Adrenal gland (tissue), 19 donors: ENCODE measurements at regions of chr5 and their contacts with region 1.

Region 1: GRCh38 chr5:134304311-134304710 is 62.7 kb downstream of the CDKL3 start:
- DNase-seq: no peak
- H3K4me3 ChIP-seq: no peak overlapping the region
- H3K27ac ChIP-seq: no peak overlapping the region
- H3K4me1 ChIP-seq: no peaks in the 10 kb centered on the region
- H3K27me3 ChIP-seq: no peaks in the 10 kb centered on the region
- CTCF ChIP-seq: no peak
- POLR2A ChIP-seq: no peak

Region 2: DNA sequence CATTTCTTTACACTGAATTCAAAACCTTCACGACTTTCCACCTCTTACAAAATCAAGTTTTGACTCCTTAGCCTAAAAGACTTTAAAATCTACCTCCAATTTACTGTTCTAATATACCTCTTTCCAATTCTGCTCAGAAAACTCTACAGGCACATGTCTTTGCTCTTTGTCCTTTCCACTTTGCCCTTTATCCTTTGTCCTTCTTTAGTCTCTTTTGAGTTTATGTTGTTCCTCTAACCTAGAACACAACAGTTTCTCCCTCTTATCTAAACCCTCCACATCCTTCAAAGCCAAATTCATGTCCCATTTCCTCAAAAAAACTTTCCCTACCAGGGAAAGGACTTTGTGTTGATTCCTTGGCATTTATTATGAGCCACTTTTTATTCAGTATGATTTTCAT is 61.3 kb after region 1 on chr5:
- intact Hi-C with region 1: loop called in 1 of 2 experiments (anchors 10 kb)
- DNase-seq: no peak
- H3K4me3 ChIP-seq: no peak overlapping the region
- H3K27ac ChIP-seq: no peak overlapping the region
- H3K4me1 ChIP-seq: peaks cover 7 to 23% of the 10 kb centered on the region in 2 donors
- H3K27me3 ChIP-seq: no peaks in the 10 kb centered on the region
- CTCF ChIP-seq: no peak
- POLR2A ChIP-seq: no peak

Region 3: DNA sequence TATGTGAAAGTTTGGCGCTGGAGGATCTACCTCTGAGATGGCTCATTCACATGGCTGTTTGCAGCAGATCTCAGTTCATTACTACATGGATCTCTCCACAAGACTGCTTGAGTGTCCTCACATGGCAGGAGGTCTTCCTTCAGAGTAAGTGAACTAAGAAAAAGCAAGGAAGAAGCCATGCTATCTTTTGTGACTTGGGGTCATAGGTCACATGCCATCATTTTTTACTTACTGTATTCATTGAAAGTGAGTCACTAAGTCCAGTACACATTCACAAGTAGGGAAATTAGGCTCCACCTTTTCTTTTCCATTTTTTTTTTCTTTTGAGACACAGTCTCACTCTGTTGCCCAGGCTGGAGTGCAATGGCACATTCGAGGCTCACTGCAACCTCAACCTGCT is 116.0 kb after region 1 on chr5:
- intact Hi-C with region 1: no loop called
- DNase-seq: no peak
- H3K4me3 ChIP-seq: no peak overlapping the region
- H3K27ac ChIP-seq: no peak overlapping the region
- H3K4me1 ChIP-seq: no peaks in the 10 kb centered on the region
- H3K27me3 ChIP-seq: no peaks in the 10 kb centered on the region
- CTCF ChIP-seq: no peak
- POLR2A ChIP-seq: no peak

Region 4: GRCh38 chr5:134586866-134587524 is 282.7 kb after region 1 on chr5:
- intact Hi-C with region 1: loop called (anchors 5 kb)
- DNase-seq: peak; percentile 84 to 93 (median 90)
- H3K4me3 ChIP-seq: no peak overlapping the region
- H3K27ac ChIP-seq: peak overlapping the region in 2 of 5 donors; percentile 9 to 34
- H3K4me1 ChIP-seq: peaks cover 0 to 11% of the 10 kb centered on the region in 2 donors
- H3K27me3 ChIP-seq: no peaks in the 10 kb centered on the region
- CTCF ChIP-seq: peak; percentile 76 to 91 (median 82)
- POLR2A ChIP-seq: peak in 1 of 2 donors; percentile 9